SK-N-SH (cell line): ENCODE measurements at regions of chr4 and their contacts with region 1.

Region 1: GRCh38 chr4:168847771-168848511 is 162.1 kb downstream of the CBR4 start:
- DNase-seq: peak; percentile 44
- H3K4me3 ChIP-seq: peak overlapping the region; percentile 17 to 52; a peak in 3 of 4 replicates
- H3K27ac ChIP-seq: peak overlapping the region; percentile 83 to 86
- H3K4me1 ChIP-seq: peaks cover 20 to 25% of the 10 kb centered on the region in 2 experiments
- H3K27me3 ChIP-seq: no peaks in the 10 kb centered on the region
- CTCF ChIP-seq: no peak
- EP300 ChIP-seq: peak in 1 of 2 experiments; percentile 14; a peak in 1 of 4 replicates
- RAD21 ChIP-seq: no peak; the same call in 1 of the 2 replicates

Region 2: DNA sequence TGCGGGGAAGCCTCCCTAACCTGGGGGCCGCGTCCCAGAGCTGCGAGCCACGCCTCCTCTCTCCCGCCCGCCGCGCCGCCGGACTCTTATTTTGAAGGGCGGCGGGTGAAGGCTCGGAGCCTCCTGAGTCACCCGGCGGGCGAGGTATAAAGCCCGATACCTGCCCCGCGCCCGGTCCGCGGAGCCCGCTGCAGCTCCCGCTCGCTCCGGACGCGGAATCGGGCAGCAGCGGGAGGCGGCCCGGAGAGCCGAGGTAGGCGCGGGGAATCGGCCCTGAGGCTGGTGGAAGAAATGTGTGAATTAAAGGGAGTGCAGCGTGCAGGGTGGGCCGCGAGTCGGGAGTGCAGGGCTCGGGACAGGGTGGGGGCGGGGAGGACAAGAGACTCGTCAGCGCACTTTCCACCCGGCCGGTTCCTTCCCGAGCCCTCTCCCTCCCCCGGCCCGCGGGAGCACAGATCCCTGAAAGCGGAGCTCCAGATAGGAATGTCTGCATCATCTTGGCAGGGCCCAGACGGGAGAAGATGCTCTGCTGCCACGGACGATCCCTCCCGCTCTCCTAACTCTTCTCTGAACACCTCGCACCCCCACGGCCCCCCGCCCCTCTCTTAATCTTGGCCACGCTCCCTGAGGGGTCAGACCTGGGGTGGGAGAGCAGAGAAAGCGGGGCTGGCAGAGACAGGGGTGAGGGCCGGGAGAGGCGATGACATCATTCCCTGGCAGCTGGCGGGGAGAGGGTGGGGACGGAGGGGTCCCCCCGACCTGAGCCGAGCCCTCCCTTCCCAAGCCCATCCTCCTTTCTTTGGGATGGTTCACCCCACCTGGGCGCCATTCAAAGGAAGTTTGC is 15.8 kb before region 1 on chr4:
- CTCF ChIA-PET with region 1: interaction called, 25 read pairs
- POLR2A ChIA-PET with region 1: no interaction called
- DNase-seq: peak; percentile 86
- H3K4me3 ChIP-seq: peak overlapping the region; percentile 82 to 93
- H3K27ac ChIP-seq: peak overlapping the region; percentile 80 to 90
- H3K4me1 ChIP-seq: peaks cover 10 to 13% of the 10 kb centered on the region in 2 experiments; a peak in 3 of 4 replicates
- H3K27me3 ChIP-seq: no peaks in the 10 kb centered on the region
- CTCF ChIP-seq: no peak
- EP300 ChIP-seq: no peak; a peak in 1 of 4 replicates
- RAD21 ChIP-seq: no peak

Region 3: DNA sequence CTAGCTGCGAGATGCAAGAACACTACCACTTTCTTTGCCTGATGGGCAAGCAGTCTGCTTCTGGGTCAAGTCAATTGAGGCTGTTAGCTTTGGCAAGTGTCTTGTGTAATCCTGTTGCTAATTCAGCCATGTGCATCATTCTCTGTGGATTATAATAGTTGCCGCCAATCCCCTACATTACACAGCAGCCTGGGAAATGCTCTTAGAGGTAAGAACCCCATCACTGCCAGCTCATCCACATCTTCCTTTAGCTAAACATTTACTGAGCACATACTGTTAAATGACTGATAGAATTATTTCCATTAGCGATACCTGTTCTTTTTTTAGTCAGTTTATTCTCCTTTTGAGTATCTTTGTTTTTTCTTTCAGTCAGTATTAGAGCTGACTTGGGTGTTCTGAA is 45.9 kb after region 1 on chr4:
- CTCF ChIA-PET with region 1: no interaction called
- POLR2A ChIA-PET with region 1: no interaction called
- DNase-seq: no peak
- H3K4me3 ChIP-seq: no peak overlapping the region
- H3K27ac ChIP-seq: no peak overlapping the region; a peak in 1 of 4 replicates
- H3K4me1 ChIP-seq: no peaks in the 10 kb centered on the region; a peak in 2 of 4 replicates
- H3K27me3 ChIP-seq: no peaks in the 10 kb centered on the region
- CTCF ChIP-seq: no peak
- EP300 ChIP-seq: no peak
- RAD21 ChIP-seq: no peak

Region 4: DNA sequence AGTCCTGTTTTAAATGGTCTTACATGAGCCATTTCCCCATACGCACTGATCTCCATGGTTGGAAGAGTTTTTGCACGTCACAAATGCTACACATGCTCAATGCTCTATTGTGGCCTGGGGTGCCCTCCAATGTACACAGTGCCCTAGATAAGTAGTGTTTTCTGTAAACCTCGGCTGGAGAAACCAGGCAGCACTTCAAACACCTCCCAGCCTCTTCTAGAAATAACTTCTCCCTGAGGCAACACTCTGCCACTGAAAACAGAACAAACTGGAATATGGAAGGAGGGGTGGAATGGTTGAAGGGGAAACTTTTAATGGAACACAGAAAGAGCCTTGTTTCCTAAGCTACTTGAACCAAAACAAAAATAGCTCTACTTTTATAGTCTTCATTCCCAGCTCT is 286.0 kb after region 1 on chr4:
- CTCF ChIA-PET with region 1: no interaction called
- POLR2A ChIA-PET with region 1: no interaction called
- DNase-seq: no peak
- H3K4me3 ChIP-seq: no peak overlapping the region
- H3K27ac ChIP-seq: peak overlapping the region in 1 of 2 experiments; percentile 5; a peak in 1 of 4 replicates
- H3K4me1 ChIP-seq: peaks cover under 1 to 4% of the 10 kb centered on the region in 2 experiments; a peak in 2 of 4 replicates
- H3K27me3 ChIP-seq: no peaks in the 10 kb centered on the region
- CTCF ChIP-seq: no peak
- EP300 ChIP-seq: no peak
- RAD21 ChIP-seq: no peak